K562 (cell line): ENCODE measurements at regions of chr20 and their contacts with region 1.

Region 1: DNA sequence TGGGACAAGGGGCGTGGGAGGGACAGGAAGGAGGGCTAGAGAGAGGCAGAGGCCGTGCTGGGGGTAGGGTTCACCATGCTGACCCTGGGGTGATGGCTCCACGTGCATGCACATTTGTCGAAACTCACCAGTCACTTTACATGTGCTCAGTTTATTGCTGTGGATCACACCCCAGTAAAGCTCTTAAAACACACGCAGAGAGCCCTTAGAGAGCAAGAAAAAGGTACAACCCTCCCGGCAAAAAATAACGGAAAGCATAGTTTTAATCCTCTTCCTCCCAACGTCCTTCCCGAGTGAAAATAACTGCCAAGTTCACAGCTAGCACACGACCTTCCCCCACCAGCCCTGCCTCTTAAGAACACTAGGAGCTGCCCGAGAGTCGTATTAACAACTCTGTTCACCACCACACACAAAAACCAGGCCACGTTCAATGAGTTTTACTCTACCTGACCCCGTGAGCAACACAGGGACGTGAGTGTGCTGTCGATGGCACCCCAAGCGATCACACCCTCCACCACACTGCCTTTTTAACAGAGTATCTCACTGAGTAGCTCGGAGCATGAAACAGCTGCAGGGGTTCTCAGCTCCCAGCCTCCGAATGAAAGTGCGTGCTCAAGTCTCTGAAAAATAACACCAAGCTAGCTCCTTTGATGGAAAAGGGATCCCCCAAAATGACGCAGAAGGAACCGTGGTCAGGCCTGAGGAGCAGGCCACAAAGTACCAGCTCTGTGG is 39.7 kb downstream of the TAF4 start:
- DNase-seq: peak; percentile 59 to 74 (median 66)
- ATAC-seq: peak; percentile 89
- H3K4me3 ChIP-seq: no peak overlapping the region
- H3K27ac ChIP-seq: peak overlapping the region; percentile 81
- H3K4me1 ChIP-seq: peaks cover 20 to 50% of the 10 kb centered on the region in 2 experiments
- H3K27me3 ChIP-seq: no peaks in the 10 kb centered on the region
- CTCF ChIP-seq: peak; percentile 66 to 81 (median 75)
- EP300 ChIP-seq: no peak; the same call in 1 of the 2 replicates
- POLR2A ChIP-seq: no peak
- RAD21 ChIP-seq: peak; percentile 41 to 73

Region 2: DNA sequence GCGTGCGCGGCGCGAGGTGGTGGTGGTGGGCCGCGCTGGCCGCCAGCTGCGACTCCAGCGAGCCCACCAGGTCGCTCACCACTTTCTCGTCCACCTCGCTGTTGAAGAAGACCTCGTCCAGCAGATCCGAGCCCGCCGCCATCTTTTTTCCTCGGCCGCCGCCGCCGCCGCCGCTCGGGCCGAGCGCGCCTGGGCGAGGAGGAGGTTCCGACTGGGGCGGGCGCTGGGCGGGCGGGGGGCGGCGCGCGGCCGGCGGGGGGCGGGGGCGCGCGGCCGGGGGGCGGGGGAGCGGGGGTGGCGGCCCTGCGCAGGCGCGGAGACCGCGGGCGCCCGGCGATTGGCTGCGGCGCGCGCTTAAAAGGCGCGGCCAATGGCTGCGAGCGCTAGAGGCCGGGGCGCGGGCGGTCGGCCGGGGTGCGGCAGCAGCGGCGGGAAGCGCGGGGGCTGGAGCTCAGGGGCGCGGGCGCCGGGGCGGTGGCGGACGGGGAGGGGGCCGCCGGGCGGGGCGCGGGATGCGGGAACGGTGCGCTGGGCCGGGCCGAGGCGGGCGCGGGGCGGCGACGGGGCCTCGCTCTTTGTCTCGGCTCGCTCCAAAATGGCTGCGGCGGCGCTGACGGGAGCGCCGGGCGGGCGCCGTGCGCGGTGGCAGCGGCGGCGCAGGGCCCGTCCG is 39.8 kb after region 1 on chr20 and contains the start of gene TAF4:
- CTCF ChIA-PET with region 1: no interaction called
- POLR2A ChIA-PET with region 1: interaction called, 6 read pairs
- in situ Hi-C with region 1: no loop called
- intact Hi-C with region 1: loop called (anchors 5 kb)
- DNase-seq: peak; percentile 78 to 99 (median 98)
- ATAC-seq: peak; percentile 71
- H3K4me3 ChIP-seq: peak within 1 kb of the TSS; percentile 64
- H3K27ac ChIP-seq: peak within 1 kb of the TSS; percentile 79
- H3K4me1 ChIP-seq: peaks cover 19 to 36% of the 10 kb centered on the region in 2 experiments
- H3K27me3 ChIP-seq: no peaks in the 10 kb centered on the region; a peak in 1 of 5 replicates
- CTCF ChIP-seq: no peak
- EP300 ChIP-seq: no peak
- POLR2A ChIP-seq: peak; percentile 54; the same call in 1 of the 2 replicates
- RAD21 ChIP-seq: no peak
- polyA plus RNA-seq, gene TAF4: 0.44 to 0.48 TPM

Region 3: DNA sequence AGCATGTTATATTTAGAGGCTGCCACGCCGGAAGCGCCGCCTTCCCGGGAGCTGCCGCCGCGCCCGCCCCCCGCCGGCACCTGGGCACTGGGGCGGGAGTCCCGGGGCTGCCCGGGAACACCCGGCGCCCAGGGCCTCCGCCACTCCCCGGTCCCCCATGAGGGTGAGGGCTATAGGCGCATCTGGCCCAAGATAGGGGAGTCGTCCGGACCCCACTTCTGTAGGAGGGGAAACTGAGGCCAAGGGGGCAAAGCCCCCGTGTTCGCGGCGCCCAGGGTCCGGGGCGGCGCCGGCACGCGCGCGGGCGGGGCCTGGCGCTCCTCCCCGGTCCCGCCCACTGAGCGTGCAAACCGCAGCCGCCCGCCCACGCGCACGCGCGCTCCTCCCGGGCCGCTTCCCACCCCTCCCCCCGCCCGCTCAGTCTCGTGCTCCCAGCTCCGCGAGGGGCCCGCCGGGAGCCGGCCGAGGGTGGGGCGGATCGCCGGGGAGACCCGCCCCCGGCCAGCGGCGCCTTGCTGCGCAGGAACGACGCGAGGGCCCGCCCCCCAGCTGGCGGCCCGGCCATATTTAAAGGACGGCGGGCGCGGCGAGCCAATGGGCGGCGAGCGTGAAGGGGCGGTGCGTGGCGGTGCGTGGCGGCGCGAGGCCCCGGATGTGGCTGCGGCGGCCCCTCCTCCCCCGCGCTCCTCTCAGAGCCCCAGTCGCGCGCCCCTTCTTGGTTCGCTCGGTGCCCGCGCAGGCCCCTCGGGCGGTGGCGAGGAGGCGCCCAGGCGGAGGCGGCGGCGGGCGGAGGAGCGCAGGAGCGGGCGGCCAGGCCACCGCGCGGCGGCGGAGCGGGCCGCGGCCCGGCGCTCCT is 96.0 kb after region 1 on chr20 and contains the start of gene LSM14B:
- CTCF ChIA-PET with region 1: no interaction called
- POLR2A ChIA-PET with region 1: interaction called, 3 read pairs
- in situ Hi-C with region 1: no loop called
- intact Hi-C with region 1: loop called (anchors 5 kb)
- DNase-seq: peak; percentile 96 to 99 (median 97)
- ATAC-seq: peak; percentile 92
- H3K4me3 ChIP-seq: peak within 1 kb of the TSS; percentile 87
- H3K27ac ChIP-seq: peak within 1 kb of the TSS; percentile 98
- H3K4me1 ChIP-seq: peaks cover 13 to 45% of the 10 kb centered on the region in 2 experiments; a peak in 4 of 5 replicates
- H3K27me3 ChIP-seq: peaks cover 7 to 22% of the 10 kb centered on the region in 2 experiments; a peak in 4 of 5 replicates
- CTCF ChIP-seq: no peak
- EP300 ChIP-seq: peak; percentile 30; the same call in 1 of the 2 replicates
- POLR2A ChIP-seq: peak; percentile 53; the same call in 1 of the 2 replicates
- RAD21 ChIP-seq: no peak
- polyA plus RNA-seq, gene LSM14B: 0.66 to 0.83 TPM

Region 4: DNA sequence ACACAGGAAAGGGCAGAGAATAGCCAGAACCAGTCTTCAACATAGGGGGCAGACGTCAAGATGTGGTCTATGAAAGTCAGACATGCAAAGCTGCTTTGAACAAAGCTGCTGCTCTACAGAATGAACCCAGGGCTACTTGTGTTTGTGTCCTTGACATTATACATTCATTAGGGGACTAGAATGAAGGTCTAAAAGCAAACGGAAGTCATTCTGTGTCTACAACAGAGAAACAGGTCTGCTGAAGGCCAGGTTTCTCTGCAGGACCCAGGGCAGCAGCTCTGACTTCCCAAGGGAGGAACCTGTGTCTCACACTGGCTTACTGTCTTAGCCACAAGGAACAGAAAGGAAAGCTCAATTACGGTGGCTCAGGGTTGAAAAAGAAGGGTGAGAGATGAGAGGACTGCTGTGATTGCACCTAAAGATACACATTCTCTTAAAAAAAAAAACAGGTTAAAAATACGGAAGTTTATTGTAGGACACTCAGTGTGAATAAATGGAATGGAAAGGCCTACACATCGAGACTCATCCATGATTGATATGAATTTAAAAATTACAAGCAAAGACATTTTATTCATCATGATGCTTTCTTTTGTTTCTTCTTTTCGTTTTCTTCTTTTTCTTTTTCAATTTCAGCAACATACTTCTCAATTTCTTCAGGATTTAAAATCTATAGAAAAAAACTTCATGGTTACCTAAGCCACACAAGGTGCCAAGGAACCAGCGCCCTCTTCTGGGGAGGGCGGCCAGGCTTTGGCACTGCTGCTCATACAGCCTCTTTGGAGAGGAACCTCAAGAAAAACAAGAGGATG is 110.5 kb after region 1 on chr20:
- CTCF ChIA-PET with region 1: no interaction called
- POLR2A ChIA-PET with region 1: interaction called, 4 read pairs
- in situ Hi-C with region 1: loop called (anchors 5 kb)
- intact Hi-C with region 1: loop called (anchors 5 kb)
- DNase-seq: peak in 2 of 4 experiments; percentile 50 to 74
- ATAC-seq: peak; percentile 78
- H3K4me3 ChIP-seq: no peak overlapping the region
- H3K27ac ChIP-seq: no peak overlapping the region
- H3K4me1 ChIP-seq: peaks cover 5 to 6% of the 10 kb centered on the region in 2 experiments; a peak in 4 of 5 replicates
- H3K27me3 ChIP-seq: no peaks in the 10 kb centered on the region
- CTCF ChIP-seq: peak; percentile 74 to 85 (median 85)
- EP300 ChIP-seq: no peak
- POLR2A ChIP-seq: peak; percentile 62; the same call in 1 of the 2 replicates
- RAD21 ChIP-seq: peak; percentile 61 to 74

Region 5: DNA sequence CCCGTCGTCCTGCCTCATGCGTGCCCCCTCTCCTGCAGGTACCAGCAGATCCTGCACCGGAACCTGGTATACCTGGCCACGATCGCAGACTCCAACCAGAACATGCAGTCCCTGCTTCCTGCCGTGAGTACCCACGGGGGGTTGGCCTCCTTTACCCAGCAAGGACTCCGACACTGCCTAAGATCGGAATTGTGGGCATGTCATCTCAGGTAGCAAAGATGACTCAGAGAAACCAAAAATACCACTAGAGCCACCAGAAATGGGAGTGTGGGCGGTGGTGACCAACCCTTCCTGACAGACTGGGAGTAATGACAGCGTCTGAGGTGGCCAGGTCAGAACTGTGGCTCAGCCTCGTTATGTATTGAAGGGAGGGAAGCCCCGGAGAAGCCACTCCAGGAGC is 133.8 kb after region 1 on chr20:
- CTCF ChIA-PET with region 1: no interaction called
- POLR2A ChIA-PET with region 1: no interaction called
- in situ Hi-C with region 1: no loop called
- intact Hi-C with region 1: no loop called
- DNase-seq: peak in 1 of 4 experiments; percentile 42
- ATAC-seq: no peak
- H3K4me3 ChIP-seq: no peak overlapping the region
- H3K27ac ChIP-seq: no peak overlapping the region; the same call in 2 of the 3 replicates
- H3K4me1 ChIP-seq: peaks cover 2 to 50% of the 10 kb centered on the region in 2 experiments; a peak in 3 of 5 replicates
- H3K27me3 ChIP-seq: no peaks in the 10 kb centered on the region
- CTCF ChIP-seq: no peak
- EP300 ChIP-seq: no peak
- POLR2A ChIP-seq: no peak
- RAD21 ChIP-seq: no peak